ENCODE measurements at regions of chr15 and their contacts with region 1.

Region 1: GRCh38 chr15:79004336-79004735 is 59.5 kb upstream of the CTSH start:
- DNase-seq: peak; percentile 43
- ATAC-seq: peak; percentile 87
- H3K4me3 Mint-ChIP-seq: peak overlapping the region; percentile 65
- H3K27ac Mint-ChIP-seq: peak overlapping the region; percentile 93
- H3K4me1 Mint-ChIP-seq: peaks cover 58% of the 10 kb centered on the region
- H3K27me3 Mint-ChIP-seq: no peaks in the 10 kb centered on the region
- CTCF ChIP-seq: no peak

Region 2: GRCh38 chr15:78685159-78685921 is 319.0 kb before region 1 on chr15:
- CTCF ChIA-PET with region 1: no interaction called
- POLR2A ChIA-PET with region 1: no interaction called
- intact Hi-C with region 1: no loop called
- DNase-seq: no peak
- ATAC-seq: no peak
- H3K4me3 Mint-ChIP-seq: no peak overlapping the region
- H3K27ac Mint-ChIP-seq: no peak overlapping the region
- H3K4me1 Mint-ChIP-seq: no peaks in the 10 kb centered on the region
- H3K27me3 Mint-ChIP-seq: peaks cover 8% of the 10 kb centered on the region
- CTCF ChIP-seq: no peak

Region 3: DNA sequence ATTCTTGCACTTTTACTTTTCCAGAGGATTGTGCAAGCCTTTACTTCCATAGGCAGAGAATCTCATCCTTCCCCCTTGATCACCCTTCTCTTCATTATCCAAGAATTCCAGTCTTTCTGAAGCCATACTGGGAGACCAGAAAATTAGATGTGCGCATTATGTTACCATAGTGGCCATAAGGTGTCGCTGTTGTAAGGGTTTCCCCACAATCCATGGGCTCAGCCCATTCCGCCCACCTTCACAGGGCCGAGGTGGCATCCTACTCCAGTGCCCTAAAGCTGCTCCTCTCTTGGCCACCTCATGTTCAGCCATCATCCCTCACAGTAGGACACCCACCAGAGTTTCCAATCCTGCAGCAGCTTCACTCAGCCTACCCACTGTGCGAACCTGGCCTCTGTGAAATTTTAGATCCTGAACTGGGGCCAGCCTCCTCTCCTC is 94.5 kb before region 1 on chr15:
- CTCF ChIA-PET with region 1: interaction called, 22 read pairs
- POLR2A ChIA-PET with region 1: interaction called, 5 read pairs
- intact Hi-C with region 1: loop called (anchors 1 kb)
- DNase-seq: no peak
- ATAC-seq: peak; percentile 75
- H3K4me3 Mint-ChIP-seq: no peak overlapping the region
- H3K27ac Mint-ChIP-seq: peak overlapping the region; percentile 38
- H3K4me1 Mint-ChIP-seq: peaks cover 21% of the 10 kb centered on the region
- H3K27me3 Mint-ChIP-seq: no peaks in the 10 kb centered on the region
- CTCF ChIP-seq: no peak

Region 4: DNA sequence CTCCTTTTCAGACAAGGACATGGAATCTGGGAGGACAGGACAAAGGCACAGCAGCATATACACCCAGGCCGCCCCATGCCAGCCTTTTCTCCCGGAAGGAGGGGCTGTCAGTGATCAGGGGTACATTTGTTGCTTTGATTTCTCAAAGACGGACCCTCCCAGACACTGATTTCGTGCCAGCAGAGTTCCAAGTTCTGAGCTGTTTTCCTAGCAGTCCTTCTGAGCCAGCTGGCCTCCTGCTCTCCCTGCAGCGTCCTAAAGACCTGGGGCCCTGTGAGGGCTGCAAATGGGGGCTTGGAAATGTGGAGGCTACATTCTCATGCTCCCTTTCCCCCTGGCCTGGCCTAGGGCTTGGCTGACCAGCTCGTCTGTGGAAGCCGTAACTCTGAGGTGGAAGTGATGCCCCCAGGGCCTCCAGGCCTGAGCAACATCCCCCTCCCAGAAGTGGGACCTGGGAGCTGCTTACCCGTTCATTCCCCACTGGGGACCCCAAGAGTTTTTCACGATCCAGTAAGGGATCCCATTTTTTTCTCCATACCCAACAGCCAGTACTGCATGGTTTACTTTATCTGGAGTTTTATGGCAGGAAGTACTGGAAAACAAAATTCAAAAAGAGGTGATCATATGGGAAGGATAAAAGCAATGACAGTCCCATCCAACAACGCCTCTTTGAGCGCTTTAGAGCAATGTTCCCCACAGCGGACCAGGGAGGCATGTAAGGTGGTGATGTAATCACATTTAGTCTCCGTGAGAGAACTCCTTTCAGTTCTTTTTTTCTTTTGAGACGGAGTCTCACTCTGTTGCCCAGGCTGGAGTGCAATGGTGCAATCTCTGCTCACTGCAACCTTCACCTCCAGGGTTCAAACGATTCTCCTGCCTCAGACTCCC is 81.6 kb before region 1 on chr15:
- CTCF ChIA-PET with region 1: interaction called, 10 read pairs
- POLR2A ChIA-PET with region 1: interaction called, 8 read pairs
- intact Hi-C with region 1: no loop called
- DNase-seq: no peak
- ATAC-seq: peak; percentile 49
- H3K4me3 Mint-ChIP-seq: no peak overlapping the region
- H3K27ac Mint-ChIP-seq: peak overlapping the region; percentile 61
- H3K4me1 Mint-ChIP-seq: peaks cover 13% of the 10 kb centered on the region
- H3K27me3 Mint-ChIP-seq: no peaks in the 10 kb centered on the region
- CTCF ChIP-seq: no peak

Region 5: GRCh38 chr15:78930556-78931401 is 73.6 kb before region 1 on chr15:
- CTCF ChIA-PET with region 1: interaction called, 3 read pairs
- POLR2A ChIA-PET with region 1: interaction called, 11 read pairs
- intact Hi-C with region 1: no loop called
- DNase-seq: no peak
- ATAC-seq: no peak
- H3K4me3 Mint-ChIP-seq: no peak overlapping the region
- H3K27ac Mint-ChIP-seq: peak overlapping the region; percentile 53
- H3K4me1 Mint-ChIP-seq: peaks cover 8% of the 10 kb centered on the region
- H3K27me3 Mint-ChIP-seq: no peaks in the 10 kb centered on the region
- CTCF ChIP-seq: no peak

Region 6: DNA sequence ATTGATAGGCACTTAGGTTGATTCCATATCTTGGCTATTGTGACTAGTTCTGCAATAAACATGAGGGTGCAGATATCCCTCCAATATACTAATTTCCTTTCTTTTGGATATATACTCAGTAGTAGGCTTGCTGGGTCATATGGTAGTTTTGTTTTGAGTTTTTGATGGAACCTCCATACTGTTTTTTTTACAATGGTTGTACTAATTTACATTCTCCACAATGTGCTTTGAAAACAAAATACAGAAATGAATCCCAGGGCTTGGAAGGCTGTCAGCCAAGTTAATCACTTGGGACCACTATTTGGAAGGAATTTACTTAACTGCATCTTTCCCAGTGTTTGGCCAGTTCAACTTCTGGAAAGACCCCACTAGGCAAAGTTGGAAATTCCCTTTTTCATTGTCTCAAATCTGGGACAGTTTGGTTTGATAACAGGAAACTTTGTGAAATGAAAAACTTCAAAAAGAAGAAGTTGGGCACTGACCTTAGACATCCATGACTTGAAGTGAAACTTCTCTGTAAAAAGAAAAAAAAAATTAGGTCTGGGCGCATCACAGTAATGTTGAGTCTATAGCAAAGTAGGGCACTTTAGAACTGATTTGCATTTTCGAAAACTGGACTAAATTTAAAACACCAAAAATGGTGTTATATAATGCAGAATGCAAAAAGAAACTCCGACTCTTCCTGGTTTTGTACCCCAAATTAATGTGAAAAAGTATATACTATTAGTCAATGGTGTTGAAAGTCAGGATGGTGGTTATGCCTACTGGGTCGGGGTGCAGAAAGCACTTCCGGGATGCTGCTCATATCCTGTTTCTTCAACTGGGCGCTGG is 65.5 kb before region 1 on chr15:
- CTCF ChIA-PET with region 1: interaction called, 3 read pairs
- POLR2A ChIA-PET with region 1: interaction called, 35 read pairs
- intact Hi-C with region 1: loop called (anchors 1 kb)
- DNase-seq: no peak
- ATAC-seq: peak; percentile 80
- H3K4me3 Mint-ChIP-seq: peak overlapping the region; percentile 78
- H3K27ac Mint-ChIP-seq: peak overlapping the region; percentile 96
- H3K4me1 Mint-ChIP-seq: peaks cover 80% of the 10 kb centered on the region
- H3K27me3 Mint-ChIP-seq: no peaks in the 10 kb centered on the region
- CTCF ChIP-seq: no peak

Region 7: DNA sequence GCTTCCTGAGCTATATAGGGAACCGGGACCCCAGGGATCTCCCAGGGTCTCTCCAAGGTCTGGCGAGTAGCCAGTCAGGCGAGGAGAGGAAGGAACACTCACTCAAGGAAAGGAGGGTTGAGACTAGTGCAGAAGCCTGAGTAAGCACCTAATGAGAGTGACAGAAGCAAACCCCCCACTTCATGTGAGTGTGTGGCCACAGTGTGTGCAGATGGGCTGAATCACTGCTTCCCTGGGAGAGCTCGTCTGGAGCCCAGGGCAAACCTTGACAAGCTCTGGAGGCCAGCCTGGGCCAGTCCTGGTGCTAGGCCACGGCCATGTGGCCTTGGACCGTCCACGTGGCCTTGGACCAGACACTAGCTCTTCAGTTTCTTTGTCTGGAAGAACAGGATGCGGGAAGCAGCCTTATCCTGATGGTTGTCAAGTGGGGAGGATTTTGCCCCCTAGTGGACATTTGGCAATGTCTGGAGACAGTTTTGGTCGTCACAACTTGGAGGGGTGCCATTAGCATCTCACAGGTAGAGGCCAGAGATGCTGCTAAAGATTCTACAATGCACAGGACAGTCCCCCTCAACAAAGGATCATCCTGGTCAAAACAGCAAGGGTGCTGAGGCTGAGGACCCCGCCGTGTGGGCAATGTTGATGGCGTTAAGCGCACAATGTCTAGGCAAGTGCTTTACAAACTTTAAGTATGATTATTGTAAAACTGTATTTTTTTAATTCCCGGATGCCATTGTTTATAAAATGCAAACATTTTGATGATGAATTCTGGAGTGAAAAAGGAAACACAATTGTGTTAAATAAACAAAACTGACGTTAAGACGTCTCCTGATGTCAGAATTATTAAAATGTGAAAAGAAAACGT is 24.6 kb before region 1 on chr15:
- CTCF ChIA-PET with region 1: interaction called, 12 read pairs
- POLR2A ChIA-PET with region 1: interaction called, 28 read pairs
- intact Hi-C with region 1: loop called (anchors 1 kb)
- DNase-seq: no peak
- ATAC-seq: no peak
- H3K4me3 Mint-ChIP-seq: peak overlapping the region; percentile 77
- H3K27ac Mint-ChIP-seq: peak overlapping the region; percentile 91
- H3K4me1 Mint-ChIP-seq: peaks cover 45% of the 10 kb centered on the region
- H3K27me3 Mint-ChIP-seq: no peaks in the 10 kb centered on the region
- CTCF ChIP-seq: no peak

Region 8: GRCh38 chr15:79015416-79015815 is 11.1 kb after region 1 on chr15:
- CTCF ChIA-PET with region 1: no interaction called
- POLR2A ChIA-PET with region 1: interaction called, 18 read pairs
- intact Hi-C with region 1: no loop called
- DNase-seq: no peak
- ATAC-seq: no peak
- H3K4me3 Mint-ChIP-seq: peak overlapping the region; percentile 19
- H3K27ac Mint-ChIP-seq: no peak overlapping the region
- H3K4me1 Mint-ChIP-seq: peaks cover 35% of the 10 kb centered on the region
- H3K27me3 Mint-ChIP-seq: no peaks in the 10 kb centered on the region
- CTCF ChIP-seq: no peak

Region 9: GRCh38 chr15:79195802-79196201 is 191.5 kb after region 1 on chr15:
- CTCF ChIA-PET with region 1: no interaction called
- POLR2A ChIA-PET with region 1: no interaction called
- intact Hi-C with region 1: no loop called
- DNase-seq: no peak
- ATAC-seq: no peak
- H3K4me3 Mint-ChIP-seq: no peak overlapping the region
- H3K27ac Mint-ChIP-seq: no peak overlapping the region
- H3K4me1 Mint-ChIP-seq: no peaks in the 10 kb centered on the region
- H3K27me3 Mint-ChIP-seq: peaks cover 20% of the 10 kb centered on the region
- CTCF ChIP-seq: no peak